ENCODE measurements at regions of chr12 and their contacts with region 1.

Region 1: DNA sequence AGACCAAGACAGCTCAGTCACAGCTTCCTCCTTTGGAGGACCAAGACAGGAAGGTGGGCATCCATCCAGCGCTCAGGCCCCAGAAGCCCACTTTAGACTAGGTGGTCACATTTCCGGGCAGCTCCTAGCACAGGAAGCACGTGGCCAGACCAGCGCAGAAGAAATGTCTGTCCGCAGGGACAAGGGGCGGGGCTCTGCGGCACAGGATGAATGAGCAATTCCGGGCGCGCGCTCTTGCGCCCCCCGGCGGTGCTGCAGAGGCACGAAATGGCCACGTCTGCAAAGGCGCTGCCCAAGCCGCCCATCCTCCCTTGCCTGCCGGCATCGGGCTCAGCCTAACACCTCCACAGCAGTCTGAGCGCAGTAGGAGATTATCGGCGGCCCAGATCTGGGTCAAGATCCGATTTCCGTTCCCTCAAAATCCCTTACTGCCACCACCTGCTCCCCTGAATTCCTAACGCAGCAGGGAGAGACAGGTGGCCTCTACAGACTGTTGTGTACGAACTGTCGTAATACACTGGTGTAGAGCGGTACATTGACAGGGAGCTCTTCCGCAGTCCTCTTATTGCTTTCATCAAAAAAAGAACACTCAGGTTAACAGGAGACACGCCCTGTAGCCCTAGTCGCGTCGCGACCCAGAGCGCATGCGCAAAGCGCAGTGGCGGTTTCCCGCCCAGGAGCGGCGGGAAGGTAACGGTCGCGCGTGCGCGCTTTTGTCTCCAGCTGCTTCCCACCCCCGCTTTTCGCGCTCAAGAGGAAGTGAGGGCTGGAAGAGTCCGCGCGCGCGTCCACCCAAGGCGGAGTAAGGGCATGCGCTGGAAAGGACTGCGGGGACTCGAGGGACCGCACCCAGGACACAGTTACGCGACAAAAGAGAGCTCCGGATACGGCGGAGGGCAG is 794 bp downstream of the TUBA1B start:
- DNase-seq: peak; percentile 93
- ATAC-seq: peak; percentile 59
- H3K4me3 Mint-ChIP-seq: peak overlapping the region; percentile 98
- H3K27ac Mint-ChIP-seq: peak overlapping the region; percentile 99
- H3K4me1 Mint-ChIP-seq: peaks cover 53% of the 10 kb centered on the region
- H3K27me3 Mint-ChIP-seq: no peaks in the 10 kb centered on the region

Region 2: DNA sequence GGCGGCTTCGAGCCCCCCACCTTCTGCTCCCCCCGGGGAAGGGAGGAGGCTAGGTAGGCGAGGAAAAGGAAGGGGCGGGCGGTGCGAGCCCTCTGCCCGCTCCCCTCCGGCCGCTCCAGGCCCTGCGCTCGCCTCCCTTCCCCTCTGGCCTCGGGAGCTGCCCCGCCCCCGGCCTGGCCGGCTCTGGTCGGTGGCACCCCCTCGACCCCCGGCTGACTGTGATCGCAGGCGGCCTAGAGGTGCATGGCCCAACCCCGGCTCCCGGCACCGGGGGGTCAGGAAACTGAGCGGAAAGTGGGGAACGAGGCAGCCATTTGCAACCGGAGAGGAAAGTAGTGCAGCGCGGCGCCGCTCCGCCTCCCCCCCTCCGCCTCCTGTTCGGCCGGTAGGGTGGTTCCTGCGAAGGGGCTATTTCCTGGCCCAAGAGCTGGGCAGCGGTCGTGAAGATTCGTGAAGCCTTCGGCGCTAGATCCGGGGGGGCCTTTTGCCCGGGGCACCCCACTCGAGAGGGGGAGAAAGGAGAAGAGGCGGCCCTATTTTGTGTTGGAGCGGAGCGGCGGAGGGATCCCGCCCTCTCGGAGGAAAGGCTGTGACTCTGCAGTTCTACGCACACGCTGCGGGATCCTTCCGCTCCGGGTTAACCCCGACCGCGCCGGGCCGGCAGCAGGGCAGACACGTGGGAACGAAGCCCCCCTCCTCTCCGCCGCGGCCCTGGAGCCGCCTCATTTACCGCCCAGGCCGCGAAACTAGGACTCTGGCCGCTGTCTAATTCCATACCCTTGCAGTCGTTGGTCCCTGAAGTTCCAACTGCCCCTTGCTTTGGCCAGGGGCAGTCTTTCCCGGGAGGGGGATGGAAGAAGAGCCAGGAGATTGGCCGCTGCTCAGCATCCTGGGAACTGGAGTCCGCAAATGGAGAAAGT is 69.9 kb before region 1 on chr12 and contains the start of gene KMT2D:
- CTCF ChIA-PET with region 1: interaction called, 46 read pairs
- POLR2A ChIA-PET with region 1: interaction called, 28 read pairs
- DNase-seq: peak; percentile 92
- ATAC-seq: peak; percentile 78
- H3K4me3 Mint-ChIP-seq: peak within 1 kb of the TSS; percentile 95
- H3K27ac Mint-ChIP-seq: peak within 1 kb of the TSS; percentile 96
- H3K4me1 Mint-ChIP-seq: peaks cover 49% of the 10 kb centered on the region
- H3K27me3 Mint-ChIP-seq: no peaks in the 10 kb centered on the region
- total RNA-seq, gene KMT2D: 113 TPM

Region 3: DNA sequence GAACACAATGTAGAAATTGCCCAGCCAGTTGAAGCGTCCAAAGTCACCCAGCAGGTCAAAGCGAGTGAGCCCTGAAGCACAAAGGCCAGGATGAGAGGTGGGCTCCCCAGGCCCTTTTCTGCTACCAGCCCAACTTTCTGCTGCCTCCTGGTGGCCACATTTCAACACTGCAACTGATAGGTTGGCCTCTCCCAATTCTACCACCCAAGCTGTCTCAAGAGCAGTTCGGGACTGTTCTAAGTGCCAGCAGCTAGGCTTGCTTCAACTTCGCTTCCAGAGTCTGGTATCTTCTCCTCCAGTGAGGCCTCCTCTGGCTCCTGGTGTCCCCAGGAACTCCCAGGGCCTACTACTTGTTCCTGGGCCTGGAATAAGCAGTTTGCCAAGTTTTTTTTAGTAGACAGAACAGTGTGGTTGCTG is 32.4 kb before region 1 on chr12:
- CTCF ChIA-PET with region 1: interaction called, 26 read pairs
- POLR2A ChIA-PET with region 1: interaction called, 165 read pairs
- DNase-seq: peak; percentile 75
- ATAC-seq: peak; percentile 70
- H3K4me3 Mint-ChIP-seq: no peak overlapping the region
- H3K27ac Mint-ChIP-seq: no peak overlapping the region
- H3K4me1 Mint-ChIP-seq: peaks cover 13% of the 10 kb centered on the region
- H3K27me3 Mint-ChIP-seq: peaks cover 22% of the 10 kb centered on the region

Region 4: GRCh38 chr12:49174218-49174617 is 43.8 kb after region 1 on chr12:
- CTCF ChIA-PET with region 1: no interaction called
- POLR2A ChIA-PET with region 1: interaction called, 16 read pairs
- DNase-seq: no peak
- ATAC-seq: no peak
- H3K4me3 Mint-ChIP-seq: no peak overlapping the region
- H3K27ac Mint-ChIP-seq: no peak overlapping the region
- H3K4me1 Mint-ChIP-seq: no peaks in the 10 kb centered on the region
- H3K27me3 Mint-ChIP-seq: peaks cover 2% of the 10 kb centered on the region

Region 5: DNA sequence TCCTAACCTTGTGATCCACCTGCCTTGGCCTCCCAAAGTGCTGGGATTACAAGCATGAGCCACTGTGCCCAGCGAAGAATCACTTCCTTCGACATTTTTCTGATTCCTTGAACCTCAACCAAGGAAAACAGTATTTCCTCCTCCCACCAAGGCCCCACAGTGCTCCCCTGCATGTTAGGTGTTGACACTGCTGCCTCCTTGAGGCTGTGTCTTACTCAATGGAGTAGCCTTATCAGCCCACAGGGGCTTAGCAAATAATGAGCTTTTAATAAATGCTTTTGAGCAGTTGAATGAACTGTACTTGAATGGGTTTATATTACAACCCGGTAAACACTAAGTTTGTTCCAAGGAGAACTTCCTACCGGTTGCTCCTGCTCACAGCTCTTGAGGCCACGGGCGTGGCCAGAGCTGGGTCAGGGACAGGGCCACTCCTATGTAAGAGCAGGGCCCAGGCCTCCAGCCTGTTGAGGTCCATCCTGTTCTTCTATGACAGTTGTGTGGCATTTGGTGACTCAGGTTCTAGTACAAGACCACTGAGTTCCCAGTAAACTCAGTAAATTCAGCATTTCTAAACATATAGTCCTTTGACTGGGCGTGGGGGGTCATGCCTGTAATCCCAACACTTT is 95.3 kb after region 1 on chr12:
- CTCF ChIA-PET with region 1: interaction called, 5 read pairs
- POLR2A ChIA-PET with region 1: interaction called, 14 read pairs
- DNase-seq: no peak
- ATAC-seq: no peak
- H3K4me3 Mint-ChIP-seq: no peak overlapping the region
- H3K27ac Mint-ChIP-seq: no peak overlapping the region
- H3K4me1 Mint-ChIP-seq: no peaks in the 10 kb centered on the region
- H3K27me3 Mint-ChIP-seq: peaks cover 11% of the 10 kb centered on the region

Region 6: DNA sequence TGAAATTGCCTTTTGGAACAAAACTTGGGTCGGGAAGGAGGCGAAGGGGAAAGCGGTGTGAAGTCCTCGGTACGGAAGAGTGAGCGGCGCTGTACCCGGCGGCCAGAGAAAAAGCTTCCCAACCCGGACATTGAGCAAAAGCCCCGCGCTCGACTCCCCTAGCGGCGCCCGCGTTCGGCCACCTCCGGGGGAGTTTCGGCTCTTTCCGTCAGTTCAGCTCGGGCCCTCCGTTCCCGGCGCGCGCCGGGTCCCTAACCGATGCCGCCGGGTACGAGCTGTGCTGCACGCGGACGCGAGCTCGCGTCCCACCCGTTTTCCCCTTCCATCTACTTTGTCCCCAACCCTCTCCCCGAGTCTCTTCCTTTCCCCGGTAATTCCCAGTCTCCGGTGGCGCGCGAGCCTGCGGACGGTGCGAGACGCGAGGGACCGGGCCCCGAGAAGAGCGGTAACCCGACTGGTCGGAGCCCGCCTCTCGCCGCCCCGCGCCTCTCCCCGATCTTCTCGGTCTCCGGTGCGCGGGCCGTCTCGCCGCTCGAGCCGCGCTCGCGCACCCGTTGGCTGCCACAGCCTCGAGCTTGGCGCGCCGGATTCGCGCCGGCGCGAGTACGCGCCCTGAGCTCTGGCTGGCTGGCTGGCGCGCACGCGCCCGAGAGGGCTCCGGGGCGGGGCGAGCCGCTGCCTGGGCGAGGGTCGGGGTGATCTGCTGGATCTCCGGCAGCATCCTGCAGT is 236.4 kb after region 1 on chr12:
- CTCF ChIA-PET with region 1: interaction called, 3 read pairs
- POLR2A ChIA-PET with region 1: interaction called, 23 read pairs
- DNase-seq: peak; percentile 90
- ATAC-seq: peak; percentile 89
- H3K4me3 Mint-ChIP-seq: peak overlapping the region; percentile 97
- H3K27ac Mint-ChIP-seq: peak overlapping the region; percentile 98
- H3K4me1 Mint-ChIP-seq: peaks cover 38% of the 10 kb centered on the region
- H3K27me3 Mint-ChIP-seq: no peaks in the 10 kb centered on the region

Measured in activated CD8-positive, alpha-beta T cell treated with anti-CD3 and anti-CD28 coated beads, Interleukin-2, amount 10 ng/mL, durations not matched to agents 7 days and 5 days (primary cell).